ENCODE measurements at regions of chr7 and their contacts with region 1.

Region 1: DNA sequence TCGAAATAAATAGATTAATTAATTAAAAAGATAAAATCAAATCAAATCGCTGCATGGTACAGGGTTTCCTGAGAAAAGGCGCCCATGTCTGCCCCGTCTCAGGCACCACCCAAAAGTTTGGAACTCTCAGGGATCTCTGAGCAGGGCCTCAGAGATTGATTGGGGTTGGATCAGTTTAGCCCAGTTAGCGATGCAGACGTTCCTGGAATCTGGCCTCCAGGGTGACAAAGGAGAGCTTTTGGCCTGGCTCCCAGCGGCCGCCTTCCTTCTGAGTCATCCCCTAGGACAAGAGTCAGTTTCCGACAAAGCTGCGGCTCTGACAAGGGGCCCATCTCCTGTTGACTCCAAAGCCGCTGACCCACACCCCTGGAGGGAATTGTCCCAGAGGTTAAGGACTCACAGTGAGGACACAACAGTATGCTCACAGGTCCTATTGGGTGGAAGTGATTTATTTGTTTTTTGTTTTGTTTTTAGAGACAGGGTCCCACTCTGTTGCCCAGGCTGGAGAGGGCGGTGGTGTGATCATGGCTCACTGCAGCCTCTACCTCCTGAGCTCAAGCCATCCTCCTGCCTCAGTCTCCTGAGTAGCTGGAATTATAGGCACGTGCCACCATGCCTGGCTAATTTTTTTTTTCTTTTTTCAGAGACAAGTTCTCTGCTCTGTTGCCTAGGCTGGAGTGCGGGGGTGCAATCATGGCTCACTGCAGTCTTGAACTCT is 6.9 kb downstream of the ORAI2 start:
- DNase-seq: no peak
- ATAC-seq: no peak

Region 2: DNA sequence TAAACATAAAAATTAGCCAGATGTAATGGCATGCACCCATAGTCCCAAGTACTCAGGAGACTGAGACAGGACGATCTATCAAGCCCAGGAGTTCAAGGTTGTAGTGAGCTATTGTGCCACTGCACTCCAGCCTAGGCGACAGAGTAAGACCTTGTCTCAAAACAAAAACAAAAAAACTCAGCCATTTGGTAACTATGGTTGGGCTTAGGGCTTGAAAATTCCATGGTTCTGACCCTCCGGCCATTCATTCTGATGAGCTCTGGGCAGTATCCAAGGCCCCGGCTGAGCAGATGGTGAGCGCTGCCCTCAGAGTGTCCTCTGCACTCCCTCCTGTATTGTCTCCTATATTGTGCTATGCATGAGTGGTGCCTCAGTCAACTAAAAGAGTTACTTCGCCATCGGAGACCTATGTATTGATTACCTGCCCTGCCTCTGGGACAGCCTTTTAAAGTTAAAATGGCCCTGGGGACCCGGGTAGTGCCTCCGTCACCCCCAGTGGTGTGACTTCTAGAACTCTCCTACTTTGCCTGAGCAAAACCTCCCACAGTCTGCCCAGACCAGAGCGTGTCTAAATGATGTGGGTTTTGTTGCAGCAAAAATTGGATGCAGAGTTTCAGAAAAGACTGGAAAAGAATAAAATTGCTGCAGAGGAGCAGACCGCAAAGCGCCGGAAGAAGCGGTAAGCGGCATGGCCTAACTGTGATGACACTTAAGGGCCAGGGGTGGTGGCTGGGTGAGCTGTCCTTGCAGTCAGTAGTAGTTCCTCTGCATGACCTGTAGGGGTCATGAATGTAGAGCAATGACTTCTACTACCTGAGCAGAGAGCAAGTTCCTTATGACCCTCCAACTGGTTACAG is 36.0 kb before region 1 on chr7:
- intact Hi-C with region 1: loop called (anchors 1 kb)
- DNase-seq: no peak
- ATAC-seq: peak; percentile 76